Heart left ventricle (tissue), 16 donors: ENCODE measurements at regions of chr18 and their contacts with region 1.

Region 1: GRCh38 chr18:35497370-35498197 is at the start of gene INO80C:
- DNase-seq: peak; percentile 92 to 96 (median 93)
- ATAC-seq: peak; percentile 98 to 99 (median 98)
- H3K4me3 ChIP-seq: peak within 1 kb of the TSS; percentile 38 to 81 (median 67)
- H3K27ac ChIP-seq: peak within 1 kb of the TSS; percentile 93 to 99 (median 94)
- H3K4me1 ChIP-seq: peaks cover 0 to 30% (median 14%) of the 10 kb centered on the region in 12 donors
- H3K27me3 ChIP-seq: no peaks in the 10 kb centered on the region
- CTCF ChIP-seq: no peak
- POLR2A ChIP-seq: peak; percentile 29 to 85
- total RNA-seq, gene INO80C: 5.6 to 29.0 (median 22.3) TPM

Region 2: DNA sequence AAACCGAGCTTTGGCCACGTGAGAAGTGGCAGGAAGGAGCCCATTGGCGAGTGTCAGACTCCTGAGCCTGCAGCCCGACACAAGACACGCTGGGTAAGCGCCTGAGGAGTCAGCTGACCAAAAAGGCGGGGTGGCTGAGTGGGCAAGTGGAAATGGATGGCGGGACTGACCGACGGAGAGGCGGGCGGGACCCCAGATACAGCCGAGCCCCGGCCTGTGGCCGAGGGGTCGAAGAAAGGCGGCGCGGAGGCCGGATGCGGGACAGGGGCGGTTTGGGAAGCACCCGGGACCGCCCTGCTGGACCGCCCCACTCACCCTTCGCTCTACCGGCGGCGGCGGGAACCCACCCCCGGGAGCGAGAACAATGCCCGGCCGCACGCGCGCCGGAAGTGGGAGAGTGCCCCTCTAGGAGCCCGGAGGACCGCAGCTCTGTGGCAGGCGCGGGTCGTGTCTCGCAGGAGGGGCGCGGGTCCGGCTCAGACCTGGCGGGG is 230.4 kb before region 1 on chr18:
- intact Hi-C with region 1: loop called in 1 of 10 experiments (anchors 10 kb)
- DNase-seq: peak; percentile 84 to 89 (median 86)
- ATAC-seq: peak; percentile 79 to 98 (median 96)
- H3K4me3 ChIP-seq: peak overlapping the region; percentile 57 to 92 (median 67)
- H3K27ac ChIP-seq: peak overlapping the region; percentile 48 to 93 (median 88)
- H3K4me1 ChIP-seq: peaks cover 0 to 10% (median 5%) of the 10 kb centered on the region in 12 donors
- H3K27me3 ChIP-seq: no peaks in the 10 kb centered on the region
- CTCF ChIP-seq: peak in 5 of 12 donors; percentile 8 to 25 (median 15)
- POLR2A ChIP-seq: peak in 1 of 2 donors; percentile 58

Region 3: GRCh38 chr18:35459005-35459441 is 38.6 kb before region 1 on chr18:
- intact Hi-C with region 1: loop called in 2 of 10 experiments (anchors 5 kb)
- DNase-seq: peak; percentile 76 to 85 (median 80)
- ATAC-seq: peak; percentile 75 to 96 (median 94)
- H3K4me3 ChIP-seq: no peak overlapping the region
- H3K27ac ChIP-seq: peak overlapping the region in 11 of 12 donors; percentile 48 to 83 (median 59)
- H3K4me1 ChIP-seq: peaks cover 0 to 60% (median 43%) of the 10 kb centered on the region in 12 donors
- H3K27me3 ChIP-seq: no peaks in the 10 kb centered on the region
- CTCF ChIP-seq: no peak
- POLR2A ChIP-seq: no peak

Region 4: GRCh38 chr18:35478520-35479435 is 18.8 kb before region 1 on chr18:
- intact Hi-C with region 1: no loop called
- DNase-seq: peak in 1 of 5 donors; percentile 34
- ATAC-seq: peak in 3 of 4 donors; percentile 64 to 95 (median 73)
- H3K4me3 ChIP-seq: no peak overlapping the region
- H3K27ac ChIP-seq: peak overlapping the region in 2 of 12 donors; percentile 28 to 34
- H3K4me1 ChIP-seq: peaks cover 0 to 28% (median 0%) of the 10 kb centered on the region in 12 donors
- H3K27me3 ChIP-seq: no peaks in the 10 kb centered on the region
- CTCF ChIP-seq: no peak
- POLR2A ChIP-seq: no peak